SK-N-SH (cell line): ENCODE measurements at regions of chrX and their contacts with region 1.

Region 1: DNA sequence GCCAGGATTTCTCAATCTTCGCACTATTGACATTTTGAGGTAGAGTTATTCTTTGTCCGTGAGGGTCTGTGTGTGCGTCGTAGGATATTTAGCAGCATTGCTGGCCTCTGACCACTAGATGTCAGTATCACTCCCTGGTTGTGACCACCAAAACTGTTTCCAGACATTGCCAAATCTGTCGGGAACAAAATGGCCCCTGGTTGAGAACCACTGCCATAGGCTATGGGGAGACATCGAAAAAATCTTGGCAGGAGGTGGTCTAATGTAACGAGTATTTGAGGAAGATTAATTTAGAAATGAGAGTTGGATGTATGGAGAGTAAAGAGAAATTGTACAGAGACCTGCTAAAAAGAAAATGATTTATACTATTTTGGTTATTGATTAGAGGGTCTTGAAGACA is 108.4 kb downstream of the DOCK11 start:
- DNase-seq: peak; percentile 44
- H3K4me3 ChIP-seq: 0 out of 4 replicates have a peak overlapping the region, but pooled peaks of 1 of the 2 experiments have one; percentile 0
- H3K27ac ChIP-seq: no peak overlapping the region
- H3K4me1 ChIP-seq: no peaks in the 10 kb centered on the region
- H3K27me3 ChIP-seq: peaks cover 4% of the 10 kb centered on the region; the same call in 1 of the 2 replicates
- CTCF ChIP-seq: peak; percentile 93
- EP300 ChIP-seq: no peak
- RAD21 ChIP-seq: peak; percentile 81

Region 2: GRCh38 chrX:118459494-118459893 is 144.5 kb before region 1 on chrX:
- CTCF ChIA-PET with region 1: interaction called, 72 read pairs
- POLR2A ChIA-PET with region 1: interaction called, 3 read pairs
- DNase-seq: peak; percentile 43
- H3K4me3 ChIP-seq: no peak overlapping the region
- H3K27ac ChIP-seq: no peak overlapping the region
- H3K4me1 ChIP-seq: no peaks in the 10 kb centered on the region
- H3K27me3 ChIP-seq: no peaks in the 10 kb centered on the region; the same call in 1 of the 2 replicates
- CTCF ChIP-seq: peak; percentile 70
- EP300 ChIP-seq: no peak
- RAD21 ChIP-seq: peak; percentile 77

Region 3: GRCh38 chrX:118495061-118495921 is 108.7 kb before region 1 on chrX and contains the start of gene DOCK11:
- CTCF ChIA-PET with region 1: interaction called, 13 read pairs
- POLR2A ChIA-PET with region 1: no interaction called
- DNase-seq: peak; percentile 84
- H3K4me3 ChIP-seq: peak within 1 kb of the TSS; percentile 59 to 76
- H3K27ac ChIP-seq: peak within 1 kb of the TSS; percentile 6 to 62; a peak in 3 of 4 replicates
- H3K4me1 ChIP-seq: peaks cover 0 to 4% of the 10 kb centered on the region in 2 experiments; a peak in 1 of 4 replicates
- H3K27me3 ChIP-seq: peaks cover 6% of the 10 kb centered on the region; the same call in 1 of the 2 replicates
- CTCF ChIP-seq: no peak
- EP300 ChIP-seq: no peak
- RAD21 ChIP-seq: no peak
- polyA plus RNA-seq, gene DOCK11: 34.8 and 39.3 TPM in 2 replicates

Region 4: DNA sequence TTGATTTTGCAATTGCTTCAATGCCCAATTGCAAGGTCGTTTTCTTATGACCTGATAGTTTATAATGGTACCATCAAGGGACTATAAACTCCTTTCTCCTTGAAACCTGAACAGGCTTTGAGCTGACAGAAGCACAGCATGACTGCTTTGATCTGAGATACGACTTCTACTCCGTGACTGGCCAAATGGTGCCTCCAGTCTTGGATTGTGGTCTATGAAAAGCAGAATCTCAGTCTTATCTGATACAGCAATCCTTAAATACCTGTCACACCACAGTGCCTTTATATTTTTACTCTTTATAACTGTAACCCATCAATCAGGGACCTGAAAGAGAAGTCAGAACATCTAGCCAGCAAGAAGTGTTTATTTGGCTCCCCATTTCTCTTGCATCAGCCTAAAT is 15.3 kb before region 1 on chrX:
- CTCF ChIA-PET with region 1: interaction called, 13 read pairs
- POLR2A ChIA-PET with region 1: no interaction called
- DNase-seq: no peak
- H3K4me3 ChIP-seq: no peak overlapping the region
- H3K27ac ChIP-seq: no peak overlapping the region
- H3K4me1 ChIP-seq: no peaks in the 10 kb centered on the region
- H3K27me3 ChIP-seq: no peaks in the 10 kb centered on the region
- CTCF ChIP-seq: no peak
- EP300 ChIP-seq: no peak
- RAD21 ChIP-seq: no peak

Region 5: GRCh38 chrX:118614150-118614549 is 10.2 kb after region 1 on chrX:
- CTCF ChIA-PET with region 1: interaction called, 34 read pairs
- POLR2A ChIA-PET with region 1: no interaction called
- DNase-seq: no peak
- H3K4me3 ChIP-seq: no peak overlapping the region
- H3K27ac ChIP-seq: no peak overlapping the region
- H3K4me1 ChIP-seq: no peaks in the 10 kb centered on the region
- H3K27me3 ChIP-seq: no peaks in the 10 kb centered on the region
- CTCF ChIP-seq: no peak
- EP300 ChIP-seq: no peak
- RAD21 ChIP-seq: no peak

Region 6: DNA sequence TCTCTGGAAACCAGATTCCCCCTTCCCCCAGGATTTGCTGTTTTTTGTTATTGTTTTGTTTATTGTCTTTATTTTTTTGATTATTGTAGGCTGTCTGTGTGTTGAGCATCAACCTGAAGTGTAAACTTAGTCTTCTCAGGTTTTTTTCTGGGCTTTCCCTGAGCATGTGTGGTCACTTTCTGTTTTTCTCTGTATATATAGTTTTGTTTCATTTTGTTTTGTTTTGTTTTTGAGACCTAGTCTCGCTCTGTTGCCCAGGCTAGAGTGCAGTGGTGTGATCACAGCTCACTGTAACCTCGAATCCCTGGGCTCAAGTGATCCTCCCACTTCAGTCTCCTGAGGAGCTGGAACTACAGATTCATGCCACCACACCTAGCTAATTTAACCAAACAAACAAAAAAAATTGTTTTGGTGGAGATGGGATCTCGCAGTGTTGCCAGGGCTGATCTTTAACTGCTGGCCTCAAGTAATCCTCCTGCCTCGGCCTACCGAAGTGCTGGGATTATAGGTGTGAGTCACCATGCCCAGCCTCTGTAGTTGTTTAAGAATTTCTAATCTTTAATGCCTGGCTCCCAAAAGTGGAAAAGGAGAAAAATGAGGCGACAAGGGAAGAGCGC is 132.5 kb after region 1 on chrX:
- CTCF ChIA-PET with region 1: no interaction called
- POLR2A ChIA-PET with region 1: no interaction called
- DNase-seq: no peak
- H3K4me3 ChIP-seq: no peak overlapping the region
- H3K27ac ChIP-seq: no peak overlapping the region
- H3K4me1 ChIP-seq: no peaks in the 10 kb centered on the region
- H3K27me3 ChIP-seq: no peaks in the 10 kb centered on the region
- CTCF ChIP-seq: no peak
- EP300 ChIP-seq: no peak
- RAD21 ChIP-seq: no peak

Region 7: GRCh38 chrX:118807151-118808017 is 203.4 kb after region 1 on chrX:
- CTCF ChIA-PET with region 1: interaction called, 26 read pairs
- POLR2A ChIA-PET with region 1: no interaction called
- DNase-seq: peak; percentile 45
- H3K4me3 ChIP-seq: no peak overlapping the region
- H3K27ac ChIP-seq: no peak overlapping the region
- H3K4me1 ChIP-seq: no peaks in the 10 kb centered on the region
- H3K27me3 ChIP-seq: no peaks in the 10 kb centered on the region
- CTCF ChIP-seq: peak; percentile 73
- EP300 ChIP-seq: no peak
- RAD21 ChIP-seq: peak; percentile 83